Activated CD4-positive, alpha-beta T cell treated with anti-CD3 and anti-CD28 coated beads, Interleukin-2, amount 10 ng/mL, durations not matched to agents 24 days and 14 days (primary cell): ENCODE measurements at regions of chr1 and their contacts with region 1.

Region 1: GRCh38 chr1:180585994-180586359 is 27.2 kb downstream of the OVAAL start:
- DNase-seq: no peak
- H3K4me3 Mint-ChIP-seq: peak overlapping the region; percentile 75
- H3K27ac Mint-ChIP-seq: peak overlapping the region; percentile 95
- H3K4me1 Mint-ChIP-seq: peaks cover 25% of the 10 kb centered on the region
- H3K27me3 Mint-ChIP-seq: no peaks in the 10 kb centered on the region

Region 2: GRCh38 chr1:180571832-180572636 is 13.9 kb before region 1 on chr1:
- intact Hi-C with region 1: loop called (anchors 1 kb)
- DNase-seq: peak; percentile 65
- H3K4me3 Mint-ChIP-seq: peak overlapping the region; percentile 38
- H3K27ac Mint-ChIP-seq: peak overlapping the region; percentile 73
- H3K4me1 Mint-ChIP-seq: peaks cover 22% of the 10 kb centered on the region
- H3K27me3 Mint-ChIP-seq: peaks cover 11% of the 10 kb centered on the region